Activated T-helper 1 cell treated with anti-CD3 and anti-CD28 coated beads, Interleukin-12 subunit alpha, Interleukin-12 subunit beta, Interleukin-2, Interleukin-4 antibody, amounts not matched to agents 30 ng/mL and 10 ng/mL and 1 ng/mL, durations not matched to agents 14 hours and 24 hours and 36 hours (primary cell): ENCODE measurements at regions of chr1 and their contacts with region 1.

Region 1: DNA sequence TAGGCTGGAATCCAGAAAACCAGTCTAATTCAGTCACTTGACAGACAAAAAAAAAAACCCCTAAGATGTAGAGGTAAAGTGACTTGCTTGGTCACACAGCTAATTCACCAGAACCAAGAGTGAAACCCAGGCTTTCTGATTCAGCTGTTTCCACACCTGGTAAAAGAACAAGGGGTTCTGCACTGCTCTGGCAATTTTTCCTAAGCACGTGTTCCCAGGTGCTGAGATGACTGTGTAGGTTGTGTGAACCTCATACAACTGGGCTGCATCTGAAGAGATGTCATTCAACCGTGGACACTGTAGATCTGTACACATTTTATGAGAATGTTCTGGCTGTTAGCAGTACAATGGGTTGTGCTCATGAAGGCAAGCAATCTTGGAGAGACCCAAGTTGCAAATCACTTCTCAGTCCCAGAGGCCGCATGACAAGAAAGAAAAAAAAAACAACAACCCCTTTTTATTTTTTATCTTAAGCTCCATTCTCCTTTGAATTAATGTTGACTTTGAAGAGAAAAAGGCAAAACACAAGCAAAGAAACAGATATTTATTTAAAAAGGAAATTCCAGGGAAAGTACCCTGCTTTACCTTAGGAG is 95.4 kb downstream of the INTS7 start:
- DNase-seq: peak; percentile 33
- H3K4me3 Mint-ChIP-seq: no peak overlapping the region
- H3K27ac Mint-ChIP-seq: peak overlapping the region; percentile 2
- H3K4me1 Mint-ChIP-seq: peaks cover 47% of the 10 kb centered on the region
- H3K27me3 Mint-ChIP-seq: no peaks in the 10 kb centered on the region

Region 2: GRCh38 chr1:211680752-211681327 is 259.1 kb before region 1 on chr1:
- intact Hi-C with region 1: loop called (anchors 2 kb)
- DNase-seq: peak; percentile 64
- H3K4me3 Mint-ChIP-seq: no peak overlapping the region
- H3K27ac Mint-ChIP-seq: peak overlapping the region; percentile 86
- H3K4me1 Mint-ChIP-seq: peaks cover 14% of the 10 kb centered on the region
- H3K27me3 Mint-ChIP-seq: no peaks in the 10 kb centered on the region

Region 3: GRCh38 chr1:211830330-211831142 is 109.4 kb before region 1 on chr1 and contains the start of gene LPGAT1:
- intact Hi-C with region 1: loop called (anchors 1 kb)
- DNase-seq: peak; percentile 65
- H3K4me3 Mint-ChIP-seq: peak within 1 kb of the TSS; percentile 91
- H3K27ac Mint-ChIP-seq: peak within 1 kb of the TSS; percentile 90
- H3K4me1 Mint-ChIP-seq: peaks cover 69% of the 10 kb centered on the region
- H3K27me3 Mint-ChIP-seq: peaks cover 2% of the 10 kb centered on the region
- total RNA-seq, gene LPGAT1: 35.3 and 35.6 TPM in 2 replicates

Region 4: GRCh38 chr1:212234431-212235395 is 294.7 kb after region 1 on chr1:
- intact Hi-C with region 1: loop called (anchors 5 kb)
- DNase-seq: no peak
- H3K4me3 Mint-ChIP-seq: peak overlapping the region; percentile 57
- H3K27ac Mint-ChIP-seq: peak overlapping the region; percentile 67
- H3K4me1 Mint-ChIP-seq: peaks cover 72% of the 10 kb centered on the region
- H3K27me3 Mint-ChIP-seq: no peaks in the 10 kb centered on the region

Region 5: GRCh38 chr1:212595787-212596714 is 656.1 kb after region 1 on chr1:
- intact Hi-C with region 1: loop called (anchors 5 kb)
- DNase-seq: peak; percentile 64
- H3K4me3 Mint-ChIP-seq: peak overlapping the region; percentile 68
- H3K27ac Mint-ChIP-seq: peak overlapping the region; percentile 96
- H3K4me1 Mint-ChIP-seq: peaks cover 27% of the 10 kb centered on the region
- H3K27me3 Mint-ChIP-seq: peaks cover 10% of the 10 kb centered on the region